ENCODE measurements at regions of chr1 and their contacts with region 1.

Region 1: DNA sequence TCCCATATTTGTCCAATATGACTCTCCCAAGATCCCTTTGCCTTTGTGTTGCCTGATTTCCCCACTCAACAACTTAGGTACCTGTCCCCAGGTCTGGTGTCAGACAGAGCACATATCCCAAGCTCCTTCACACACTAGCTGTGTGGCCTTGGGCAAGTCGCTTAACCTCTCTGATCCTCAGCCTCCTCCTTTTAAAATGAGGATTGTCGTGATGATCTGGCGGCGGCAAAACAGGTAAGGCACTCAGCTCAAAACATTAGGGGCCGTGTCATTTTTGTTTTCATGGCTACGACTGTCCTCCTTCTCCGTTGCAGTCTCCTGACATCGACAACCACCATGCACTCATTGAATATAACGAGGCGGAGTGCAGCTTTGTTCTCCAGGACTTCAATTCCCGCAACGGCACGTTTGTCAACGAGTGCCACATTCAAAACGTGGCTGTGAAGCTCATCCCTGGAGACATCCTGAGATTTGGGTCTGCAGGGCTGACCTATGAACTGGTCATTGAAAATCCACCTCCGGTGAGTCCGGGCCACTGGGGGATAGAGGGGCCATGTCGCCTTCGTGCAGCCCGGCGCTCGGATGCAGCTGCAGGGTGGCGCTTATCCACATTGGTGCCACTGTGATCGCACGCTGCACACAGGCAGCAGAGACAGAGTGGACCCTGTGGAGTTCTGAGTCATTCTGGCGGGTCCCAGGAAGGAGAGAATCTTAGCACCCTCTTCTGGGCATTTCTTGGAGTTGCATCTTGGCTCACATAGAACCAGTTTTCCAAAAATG is 25.2 kb downstream of the FHAD1 start:
- DNase-seq: peak; percentile 73
- ATAC-seq: peak; percentile 100
- H3K4me3 ChIP-seq: no peak overlapping the region
- H3K27ac ChIP-seq: no peak overlapping the region
- H3K4me1 ChIP-seq: peaks cover 2% of the 10 kb centered on the region; the same call in 1 of the 2 replicates
- H3K27me3 ChIP-seq: peaks cover 7% of the 10 kb centered on the region
- CTCF ChIP-seq: peak; percentile 96
- POLR2A ChIP-seq: no peak
- RAD21 ChIP-seq: peak; percentile 96

Region 2: GRCh38 chr1:15128520-15129313 is 143.5 kb before region 1 on chr1:
- CTCF ChIA-PET with region 1: interaction called, 18 read pairs
- POLR2A ChIA-PET with region 1: no interaction called
- dilution Hi-C with region 1: no loop called
- in situ Hi-C with region 1: no loop called
- intact Hi-C with region 1: loop called (anchors 1 kb)
- DNase-seq: peak; percentile 65
- ATAC-seq: peak; percentile 100
- H3K4me3 ChIP-seq: no peak overlapping the region
- H3K27ac ChIP-seq: no peak overlapping the region
- H3K4me1 ChIP-seq: no peaks in the 10 kb centered on the region
- H3K27me3 ChIP-seq: peaks cover 17% of the 10 kb centered on the region; the same call in 1 of the 2 replicates
- CTCF ChIP-seq: peak; percentile 89
- POLR2A ChIP-seq: 0 out of 2 replicates have a peak, but pooled peaks have one; percentile 50
- RAD21 ChIP-seq: peak; percentile 95

Region 3: DNA sequence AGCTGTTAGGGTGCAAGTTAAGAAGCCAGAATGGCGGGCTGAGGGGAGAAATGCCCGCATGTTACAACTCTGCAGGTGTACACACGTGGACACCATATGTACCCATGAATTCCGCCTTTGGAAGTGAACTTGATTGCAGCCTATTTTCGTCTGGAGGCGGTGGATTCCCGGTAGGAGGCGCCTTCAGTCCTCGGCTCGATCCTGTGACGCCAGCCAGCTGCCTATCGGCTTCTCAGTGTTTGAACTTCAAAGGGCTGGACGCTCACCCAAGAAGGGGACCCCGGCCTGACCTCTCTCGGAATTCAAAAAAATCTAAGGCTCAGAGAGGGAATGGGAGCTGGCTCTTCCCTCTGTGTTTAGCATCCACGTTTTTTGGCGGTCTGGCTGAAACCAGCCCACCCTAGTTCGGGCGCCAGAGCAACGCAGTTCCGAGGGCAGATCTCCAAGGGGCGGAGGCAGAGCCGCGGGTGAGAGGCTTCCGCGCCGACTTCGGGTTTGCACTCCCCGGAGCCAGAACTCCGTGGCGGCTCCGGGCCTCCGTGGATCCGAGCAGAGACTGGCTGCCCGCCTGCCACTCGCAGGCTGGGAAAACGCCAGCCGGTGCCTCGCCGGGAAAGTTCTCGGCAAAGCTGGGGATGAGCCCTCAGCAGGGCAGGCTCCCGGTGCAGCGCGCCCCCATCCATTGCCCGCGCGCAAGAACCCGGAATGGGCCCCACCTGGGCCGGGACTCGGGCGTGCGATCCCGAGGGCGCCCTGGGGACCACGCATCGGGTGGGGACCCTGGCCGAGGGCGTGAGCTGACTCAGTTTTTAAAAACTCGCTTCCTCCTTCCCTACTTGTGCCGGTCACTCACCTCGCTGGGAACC is 119.6 kb before region 1 on chr1:
- CTCF ChIA-PET with region 1: interaction called, 14 read pairs
- POLR2A ChIA-PET with region 1: no interaction called
- dilution Hi-C with region 1: no loop called
- in situ Hi-C with region 1: loop called (anchors 5 kb)
- intact Hi-C with region 1: loop called (anchors 1 kb)
- DNase-seq: peak; percentile 91
- ATAC-seq: peak; percentile 56
- H3K4me3 ChIP-seq: peak overlapping the region; percentile 80
- H3K27ac ChIP-seq: peak overlapping the region; percentile 64
- H3K4me1 ChIP-seq: peaks cover 19% of the 10 kb centered on the region
- H3K27me3 ChIP-seq: 0 out of 2 replicates have a peak, but pooled peaks cover 3% of the 10 kb centered on the region
- CTCF ChIP-seq: peak; percentile 85
- POLR2A ChIP-seq: peak; percentile 36; the same call in 1 of the 2 replicates
- RAD21 ChIP-seq: peak; percentile 83

Region 4: GRCh38 chr1:15214527-15214926 is 57.7 kb before region 1 on chr1:
- CTCF ChIA-PET with region 1: no interaction called
- POLR2A ChIA-PET with region 1: no interaction called
- dilution Hi-C with region 1: no loop called
- in situ Hi-C with region 1: no loop called
- intact Hi-C with region 1: loop called (anchors 5 kb)
- DNase-seq: peak; percentile 55
- ATAC-seq: 0 out of 2 replicates have a peak, but pooled peaks have one; percentile 42
- H3K4me3 ChIP-seq: no peak overlapping the region
- H3K27ac ChIP-seq: peak overlapping the region; percentile 81
- H3K4me1 ChIP-seq: peaks cover 26% of the 10 kb centered on the region
- H3K27me3 ChIP-seq: no peaks in the 10 kb centered on the region
- CTCF ChIP-seq: no peak
- POLR2A ChIP-seq: no peak
- RAD21 ChIP-seq: no peak

Region 5: DNA sequence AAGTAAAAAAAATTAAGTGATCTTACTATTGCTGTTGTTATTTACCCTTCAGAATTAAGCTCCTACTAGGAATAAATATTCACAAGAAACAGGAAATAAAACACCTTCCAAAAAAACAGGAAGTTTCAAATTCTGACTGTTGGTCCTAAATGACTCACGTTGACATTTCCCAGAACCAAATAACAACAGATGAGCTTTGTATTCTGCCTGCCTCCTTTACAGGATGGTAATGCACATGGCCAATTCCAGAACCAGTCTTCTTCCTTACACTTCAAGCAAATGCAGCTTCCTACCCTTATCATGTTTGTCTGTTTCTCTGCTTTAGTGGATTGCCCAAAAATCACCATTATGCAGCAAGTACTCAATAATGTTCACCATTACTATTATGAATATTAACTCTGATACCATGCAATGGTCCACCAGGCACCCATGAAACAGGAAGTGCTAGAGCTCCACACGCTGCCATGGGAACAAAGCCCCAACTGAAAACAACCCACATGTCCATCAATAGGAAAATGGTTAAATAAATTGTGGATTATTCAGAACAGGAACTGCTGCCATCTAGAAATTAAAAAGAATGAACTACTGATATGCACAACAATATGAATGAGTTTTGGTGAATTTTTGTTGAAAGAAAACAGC is 242.9 kb after region 1 on chr1:
- CTCF ChIA-PET with region 1: no interaction called
- POLR2A ChIA-PET with region 1: no interaction called
- dilution Hi-C with region 1: no loop called
- in situ Hi-C with region 1: no loop called
- intact Hi-C with region 1: no loop called
- DNase-seq: no peak
- ATAC-seq: no peak
- H3K4me3 ChIP-seq: no peak overlapping the region
- H3K27ac ChIP-seq: no peak overlapping the region
- H3K4me1 ChIP-seq: no peaks in the 10 kb centered on the region; the same call in 1 of the 2 replicates
- H3K27me3 ChIP-seq: no peaks in the 10 kb centered on the region
- CTCF ChIP-seq: no peak
- POLR2A ChIP-seq: no peak
- RAD21 ChIP-seq: no peak

Region 6: GRCh38 chr1:15526490-15527339 is 254.5 kb after region 1 on chr1 and contains the start of gene DNAJC16:
- CTCF ChIA-PET with region 1: no interaction called
- POLR2A ChIA-PET with region 1: no interaction called
- dilution Hi-C with region 1: no loop called
- in situ Hi-C with region 1: no loop called
- intact Hi-C with region 1: no loop called
- DNase-seq: peak; percentile 100
- ATAC-seq: peak; percentile 64
- H3K4me3 ChIP-seq: peak within 1 kb of the TSS; percentile 82
- H3K27ac ChIP-seq: peak within 1 kb of the TSS; percentile 63
- H3K4me1 ChIP-seq: peaks cover 2% of the 10 kb centered on the region
- H3K27me3 ChIP-seq: no peaks in the 10 kb centered on the region
- CTCF ChIP-seq: peak; percentile 37; the same call in 1 of the 2 replicates
- POLR2A ChIP-seq: peak; percentile 79
- RAD21 ChIP-seq: 0 out of 2 replicates have a peak, but pooled peaks have one; percentile 3
- total RNA-seq, gene DNAJC16: 12.5 and 13.1 TPM in 2 replicates

Measured in IMR-90 (cell line).